ENCODE measurements at regions of chr12 and their contacts with region 1.

Region 1: GRCh38 chr12:29380536-29381523 is at the start of gene ERGIC2:
- DNase-seq: peak; percentile 79 to 99 (median 89)
- ATAC-seq: peak; percentile 91
- H3K4me3 ChIP-seq: peak within 1 kb of the TSS; percentile 83 to 94
- H3K4me3 Mint-ChIP-seq: peak within 1 kb of the TSS; percentile 86
- H3K27ac ChIP-seq: peak within 1 kb of the TSS; percentile 91 to 92
- H3K27ac Mint-ChIP-seq: peak within 1 kb of the TSS; percentile 92
- H3K4me1 ChIP-seq: peaks cover 19% of the 10 kb centered on the region
- H3K4me1 Mint-ChIP-seq: peaks cover 56% of the 10 kb centered on the region
- H3K27me3 ChIP-seq: no peaks in the 10 kb centered on the region
- H3K27me3 Mint-ChIP-seq: no peaks in the 10 kb centered on the region
- CTCF ChIP-seq: no peak
- total RNA-seq, gene ERGIC2: 25.4 to 33.2 TPM

Region 2: GRCh38 chr12:27710592-27711316 is 1670.1 kb before region 1 on chr12 and contains the start of gene MRPS35:
- CTCF ChIA-PET with region 1: no interaction called
- POLR2A ChIA-PET with region 1: no interaction called
- intact Hi-C with region 1: loop called in 1 of 2 experiments (anchors 2 kb)
- DNase-seq: peak; percentile 83 to 95 (median 90)
- ATAC-seq: peak; percentile 96
- H3K4me3 ChIP-seq: peak within 1 kb of the TSS; percentile 86 to 89
- H3K4me3 Mint-ChIP-seq: peak within 1 kb of the TSS; percentile 96
- H3K27ac ChIP-seq: peak within 1 kb of the TSS; percentile 68 to 71
- H3K27ac Mint-ChIP-seq: peak within 1 kb of the TSS; percentile 95
- H3K4me1 ChIP-seq: peaks cover 11% of the 10 kb centered on the region
- H3K4me1 Mint-ChIP-seq: peaks cover 36% of the 10 kb centered on the region
- H3K27me3 ChIP-seq: no peaks in the 10 kb centered on the region
- H3K27me3 Mint-ChIP-seq: peaks cover 6% of the 10 kb centered on the region
- CTCF ChIP-seq: no peak
- total RNA-seq, gene MRPS35: 30.0 to 30.8 TPM

Region 3: GRCh38 chr12:28190321-28191050 is 1190.3 kb before region 1 on chr12 and contains the start of gene CCDC91:
- CTCF ChIA-PET with region 1: no interaction called
- POLR2A ChIA-PET with region 1: no interaction called
- intact Hi-C with region 1: loop called in 1 of 2 experiments (anchors 5 kb)
- DNase-seq: peak; percentile 80 to 96 (median 89)
- ATAC-seq: peak; percentile 77
- H3K4me3 ChIP-seq: peak within 1 kb of the TSS; percentile 58 to 90
- H3K4me3 Mint-ChIP-seq: peak within 1 kb of the TSS; percentile 97
- H3K27ac ChIP-seq: peak within 1 kb of the TSS; percentile 91 to 100
- H3K27ac Mint-ChIP-seq: peak within 1 kb of the TSS; percentile 99
- H3K4me1 ChIP-seq: peaks cover 27% of the 10 kb centered on the region
- H3K4me1 Mint-ChIP-seq: peaks cover 67% of the 10 kb centered on the region
- H3K27me3 ChIP-seq: no peaks in the 10 kb centered on the region
- H3K27me3 Mint-ChIP-seq: no peaks in the 10 kb centered on the region
- CTCF ChIP-seq: no peak
- total RNA-seq, gene CCDC91: 54.3 to 63.1 TPM

Region 4: GRCh38 chr12:29103539-29103974 is 277.3 kb before region 1 on chr12:
- CTCF ChIA-PET with region 1: no interaction called
- POLR2A ChIA-PET with region 1: interaction called, 3 read pairs
- intact Hi-C with region 1: loop called in 1 of 2 experiments (anchors 1 kb)
- DNase-seq: peak in 7 of 9 experiments; percentile 10 to 87 (median 44)
- ATAC-seq: peak; percentile 88
- H3K4me3 ChIP-seq: peak overlapping the region; percentile 7 to 33
- H3K4me3 Mint-ChIP-seq: peak overlapping the region; percentile 72
- H3K27ac ChIP-seq: peak overlapping the region; percentile 39 to 73
- H3K27ac Mint-ChIP-seq: peak overlapping the region; percentile 95
- H3K4me1 ChIP-seq: peaks cover 29% of the 10 kb centered on the region
- H3K4me1 Mint-ChIP-seq: peaks cover 39% of the 10 kb centered on the region
- H3K27me3 ChIP-seq: no peaks in the 10 kb centered on the region
- H3K27me3 Mint-ChIP-seq: no peaks in the 10 kb centered on the region
- CTCF ChIP-seq: no peak

Region 5: GRCh38 chr12:29414368-29414767 is 33.5 kb after region 1 on chr12:
- CTCF ChIA-PET with region 1: no interaction called
- POLR2A ChIA-PET with region 1: no interaction called
- intact Hi-C with region 1: no loop called
- DNase-seq: no peak
- ATAC-seq: no peak
- H3K4me3 ChIP-seq: no peak overlapping the region
- H3K4me3 Mint-ChIP-seq: no peak overlapping the region
- H3K27ac ChIP-seq: no peak overlapping the region
- H3K27ac Mint-ChIP-seq: no peak overlapping the region
- H3K4me1 ChIP-seq: no peaks in the 10 kb centered on the region
- H3K4me1 Mint-ChIP-seq: no peaks in the 10 kb centered on the region
- H3K27me3 ChIP-seq: peaks cover 0 to 5% of the 10 kb centered on the region in 2 experiments
- H3K27me3 Mint-ChIP-seq: peaks cover 29% of the 10 kb centered on the region
- CTCF ChIP-seq: no peak

Region 6: DNA sequence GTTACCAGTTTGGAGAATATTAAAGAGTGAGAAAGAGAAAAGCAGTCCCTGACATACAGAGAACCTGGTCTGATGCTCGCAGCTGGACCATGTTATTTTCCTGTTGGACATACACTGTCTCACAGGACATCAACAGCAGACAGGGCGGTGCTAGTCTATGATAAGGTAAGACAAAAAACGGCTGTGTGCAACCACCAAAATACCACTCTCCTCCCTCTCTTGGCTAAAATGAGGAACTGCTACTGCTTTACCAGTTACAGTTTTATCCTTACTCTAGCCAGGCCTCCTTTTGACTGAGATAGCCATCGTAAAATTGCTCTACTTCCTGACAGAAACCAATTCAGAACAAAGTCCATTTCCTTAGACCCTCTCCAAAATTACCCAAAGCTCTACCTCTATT is 47.1 kb after region 1 on chr12:
- CTCF ChIA-PET with region 1: no interaction called
- POLR2A ChIA-PET with region 1: interaction called, 5 read pairs
- intact Hi-C with region 1: loop called in 1 of 2 experiments (anchors 5 kb)
- DNase-seq: peak in 3 of 9 experiments; percentile 6 to 38 (median 27)
- ATAC-seq: peak; percentile 65
- H3K4me3 ChIP-seq: no peak overlapping the region
- H3K4me3 Mint-ChIP-seq: no peak overlapping the region
- H3K27ac ChIP-seq: no peak overlapping the region
- H3K27ac Mint-ChIP-seq: no peak overlapping the region
- H3K4me1 ChIP-seq: no peaks in the 10 kb centered on the region
- H3K4me1 Mint-ChIP-seq: no peaks in the 10 kb centered on the region
- H3K27me3 ChIP-seq: peaks cover 0 to 2% of the 10 kb centered on the region in 2 experiments
- H3K27me3 Mint-ChIP-seq: peaks cover 26% of the 10 kb centered on the region
- CTCF ChIP-seq: peak; percentile 41

Region 7: DNA sequence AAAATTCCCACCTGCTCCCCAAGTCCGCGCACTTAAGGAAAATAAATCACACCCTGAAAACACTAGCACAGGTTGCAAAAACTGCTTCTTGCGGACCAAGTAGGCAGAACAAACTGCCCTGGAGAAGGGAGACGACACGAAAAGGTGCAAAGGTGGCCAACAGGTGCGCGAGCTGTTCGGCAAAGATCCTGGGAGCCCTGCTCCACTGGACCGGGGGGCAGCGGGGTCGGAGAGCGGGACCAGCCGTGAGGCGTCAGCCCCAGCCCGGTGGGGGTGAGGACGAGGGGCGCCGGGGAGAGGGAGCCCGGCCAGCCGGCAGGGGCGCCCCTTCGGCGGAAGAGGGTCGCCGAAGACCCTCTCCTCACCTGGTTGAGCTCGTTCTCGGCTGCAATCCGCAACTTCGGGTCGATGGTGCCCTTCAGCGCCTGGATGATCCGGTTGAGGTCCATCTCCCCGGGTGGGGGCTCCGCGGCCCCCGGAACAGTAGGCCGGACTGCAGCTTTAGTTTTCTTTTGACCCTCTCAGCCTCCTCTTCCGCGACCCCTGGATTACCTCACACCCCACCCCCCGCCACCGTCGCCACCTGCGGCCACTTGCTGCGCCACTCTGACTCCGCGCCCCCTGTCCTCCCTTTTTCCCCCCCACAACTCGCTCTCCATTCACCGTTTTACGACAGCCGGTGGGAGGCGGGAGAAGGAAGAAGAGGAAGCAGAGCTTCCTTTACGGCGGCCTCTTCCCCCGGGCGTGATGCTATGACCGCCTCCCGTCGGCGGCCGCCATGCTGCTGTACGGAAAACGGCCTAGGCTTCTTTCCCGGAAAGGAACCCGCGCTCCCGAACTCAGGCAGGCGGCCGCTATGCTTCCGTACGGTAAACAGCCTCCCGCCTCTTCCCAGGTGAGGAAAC is 1314.6 kb after region 1 on chr12 and contains the start of gene IPO8:
- CTCF ChIA-PET with region 1: no interaction called
- POLR2A ChIA-PET with region 1: interaction called, 3 read pairs
- intact Hi-C with region 1: loop called (anchors 1 to 5 kb)
- DNase-seq: peak; percentile 65 to 93 (median 85)
- ATAC-seq: peak; percentile 93
- H3K4me3 ChIP-seq: peak within 1 kb of the TSS; percentile 63 to 96
- H3K4me3 Mint-ChIP-seq: peak within 1 kb of the TSS; percentile 98
- H3K27ac ChIP-seq: peak within 1 kb of the TSS; percentile 50 to 59
- H3K27ac Mint-ChIP-seq: peak within 1 kb of the TSS; percentile 93
- H3K4me1 ChIP-seq: peaks cover 35% of the 10 kb centered on the region
- H3K4me1 Mint-ChIP-seq: peaks cover 51% of the 10 kb centered on the region
- H3K27me3 ChIP-seq: no peaks in the 10 kb centered on the region
- H3K27me3 Mint-ChIP-seq: no peaks in the 10 kb centered on the region
- CTCF ChIP-seq: no peak
- total RNA-seq, gene IPO8: 21.0 to 22.7 TPM

Region 8: GRCh38 chr12:30754709-30755394 is 1374.0 kb after region 1 on chr12 and contains the start of gene CAPRIN2:
- CTCF ChIA-PET with region 1: interaction called, 3 read pairs
- POLR2A ChIA-PET with region 1: interaction called, 3 read pairs
- intact Hi-C with region 1: loop called in 1 of 2 experiments (anchors 2 kb)
- DNase-seq: peak; percentile 89 to 98 (median 93)
- ATAC-seq: peak; percentile 90
- H3K4me3 ChIP-seq: peak within 1 kb of the TSS; percentile 69 to 74
- H3K4me3 Mint-ChIP-seq: peak within 1 kb of the TSS; percentile 92
- H3K27ac ChIP-seq: peak within 1 kb of the TSS; percentile 66 to 69
- H3K27ac Mint-ChIP-seq: peak within 1 kb of the TSS; percentile 86
- H3K4me1 ChIP-seq: peaks cover 19% of the 10 kb centered on the region
- H3K4me1 Mint-ChIP-seq: peaks cover 44% of the 10 kb centered on the region
- H3K27me3 ChIP-seq: no peaks in the 10 kb centered on the region
- H3K27me3 Mint-ChIP-seq: no peaks in the 10 kb centered on the region
- CTCF ChIP-seq: no peak
- total RNA-seq, gene CAPRIN2: 16.2 to 17.4 TPM